Activated naive CD4-positive, alpha-beta T cell treated with anti-CD3 and anti-CD28 coated beads for 36 hours (primary cell): ENCODE measurements at regions of chr6 and their contacts with region 1.

Region 1: GRCh38 chr6:1609648-1610496 is at the start of gene FOXC1:
- DNase-seq: peak; percentile 57
- H3K4me3 Mint-ChIP-seq: peak within 1 kb of the TSS; percentile 65
- H3K27ac Mint-ChIP-seq: no peak within 1 kb of the TSS
- H3K4me1 Mint-ChIP-seq: peaks cover 48% of the 10 kb centered on the region
- H3K27me3 Mint-ChIP-seq: peaks cover 63% of the 10 kb centered on the region
- total RNA-seq, gene FOXC1: not detected

Region 2: DNA sequence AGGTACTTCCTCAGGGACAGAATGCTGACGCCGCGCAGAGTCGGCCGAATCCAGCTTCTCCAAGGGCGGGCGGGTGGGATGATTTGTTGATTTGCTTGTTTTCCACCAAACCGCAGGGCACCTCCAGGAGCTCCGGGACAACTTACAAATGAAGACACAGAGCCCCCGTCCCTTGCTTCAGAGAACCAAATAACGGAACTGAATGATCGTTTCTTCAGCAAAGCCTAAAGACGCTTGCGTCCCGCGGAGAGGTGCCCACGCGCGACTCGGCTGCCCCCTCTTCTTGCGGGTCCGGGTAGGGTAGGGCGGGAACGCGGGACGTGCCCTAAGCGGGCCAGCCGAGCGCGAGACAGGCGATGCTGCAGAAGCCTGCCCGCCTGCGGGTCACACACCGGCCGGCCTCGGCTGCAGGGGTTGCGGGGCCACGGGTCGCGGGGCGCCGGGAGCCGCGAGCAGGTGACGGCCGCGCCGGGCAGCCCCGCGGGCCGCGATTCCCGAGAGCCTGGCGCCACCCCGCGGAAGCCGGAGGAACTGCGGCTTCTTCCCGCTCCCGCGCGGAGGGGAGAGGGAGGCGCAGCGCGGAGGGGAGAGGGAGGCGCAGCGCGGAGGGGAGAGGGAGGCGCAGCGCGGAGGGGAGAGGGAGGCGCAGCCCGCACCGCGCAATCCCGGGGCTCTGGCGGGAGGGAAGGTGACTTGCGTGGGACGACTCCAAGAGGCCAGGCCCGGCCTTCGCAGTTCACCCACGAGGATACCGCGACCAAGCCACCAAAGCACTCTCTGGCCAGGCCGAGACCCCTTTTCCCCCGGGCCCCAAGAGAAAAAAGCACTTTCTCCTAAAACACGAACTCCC is 228.2 kb before region 1 on chr6:
- CTCF ChIA-PET with region 1: no interaction called
- intact Hi-C with region 1: loop called (anchors 5 kb)
- DNase-seq: peak; percentile 63
- H3K4me3 Mint-ChIP-seq: no peak overlapping the region
- H3K27ac Mint-ChIP-seq: no peak overlapping the region
- H3K4me1 Mint-ChIP-seq: peaks cover 41% of the 10 kb centered on the region
- H3K27me3 Mint-ChIP-seq: peaks cover 74% of the 10 kb centered on the region

Region 3: DNA sequence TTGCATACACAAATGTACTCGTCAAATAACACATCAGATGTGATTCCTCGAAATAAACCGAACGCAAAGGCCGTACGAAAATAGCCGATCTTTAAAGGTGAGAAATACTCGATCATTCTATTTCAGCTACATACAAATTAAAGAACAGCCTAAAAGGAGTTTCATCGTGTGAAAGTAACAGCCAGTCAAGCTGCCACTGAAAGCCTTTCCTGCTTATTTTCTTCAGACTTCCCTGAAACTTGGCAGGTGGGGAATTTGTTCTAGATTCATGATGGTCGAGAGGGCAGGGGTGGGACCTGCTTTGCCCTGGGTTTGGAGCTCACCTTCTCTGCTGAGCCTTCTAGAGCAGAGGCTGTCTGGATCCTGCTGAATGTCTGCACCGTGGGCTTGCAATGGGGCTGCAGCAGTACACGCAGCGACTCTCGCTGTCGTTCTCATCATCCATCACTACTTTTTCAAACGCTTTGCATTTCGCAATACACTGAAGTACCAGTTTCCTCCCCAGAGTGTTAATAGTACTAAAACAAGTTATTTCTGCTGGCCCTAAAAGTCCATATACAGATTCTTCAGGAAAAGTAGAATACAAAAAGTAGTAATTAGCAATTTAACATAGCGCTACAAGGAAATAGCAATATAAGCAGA is 16.0 kb after region 1 on chr6:
- CTCF ChIA-PET with region 1: interaction called, 6 read pairs
- intact Hi-C with region 1: loop called (anchors 2 kb)
- DNase-seq: no peak
- H3K4me3 Mint-ChIP-seq: no peak overlapping the region
- H3K27ac Mint-ChIP-seq: no peak overlapping the region
- H3K4me1 Mint-ChIP-seq: peaks cover 8% of the 10 kb centered on the region
- H3K27me3 Mint-ChIP-seq: peaks cover 60% of the 10 kb centered on the region

Region 4: DNA sequence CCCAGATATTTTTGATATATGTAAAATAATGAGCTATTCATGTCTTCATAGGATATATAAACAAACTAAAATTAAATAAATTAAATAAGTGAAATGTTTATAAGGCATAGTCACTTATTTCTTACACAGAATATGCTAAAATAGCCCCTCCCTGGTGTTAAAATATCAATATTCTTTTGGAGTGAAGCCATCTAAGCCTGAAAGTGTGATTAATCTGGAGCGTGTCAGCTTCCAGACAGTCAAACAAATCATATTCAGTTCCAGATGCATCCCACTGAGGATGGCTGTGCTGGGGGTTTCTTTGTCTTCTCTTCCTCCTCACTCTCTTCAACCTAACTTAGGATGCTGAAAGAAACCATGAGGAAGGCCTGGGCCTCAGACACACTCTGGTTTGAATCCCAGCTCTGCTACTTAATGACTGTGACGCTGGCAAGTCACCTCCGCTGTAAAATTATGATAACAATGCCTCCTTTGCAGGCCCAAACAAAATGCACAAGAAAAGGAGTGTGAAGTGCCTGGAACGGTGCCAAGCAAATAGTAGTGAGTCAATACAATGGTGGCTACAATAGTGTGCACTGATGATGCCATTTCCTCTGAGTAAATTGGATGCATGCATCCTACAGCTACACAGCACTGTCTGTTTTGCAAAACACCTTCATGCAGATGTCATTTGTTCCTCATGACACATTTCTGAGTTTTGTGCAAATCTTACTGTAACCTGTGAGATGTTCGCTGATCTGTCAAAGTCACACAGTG is 161.3 kb after region 1 on chr6:
- CTCF ChIA-PET with region 1: no interaction called
- intact Hi-C with region 1: loop called (anchors 5 kb)
- DNase-seq: peak; percentile 78
- H3K4me3 Mint-ChIP-seq: no peak overlapping the region
- H3K27ac Mint-ChIP-seq: no peak overlapping the region
- H3K4me1 Mint-ChIP-seq: peaks cover 47% of the 10 kb centered on the region
- H3K27me3 Mint-ChIP-seq: no peaks in the 10 kb centered on the region

Region 5: GRCh38 chr6:2063547-2063946 is 453.7 kb after region 1 on chr6:
- CTCF ChIA-PET with region 1: no interaction called
- intact Hi-C with region 1: no loop called
- DNase-seq: no peak
- H3K4me3 Mint-ChIP-seq: no peak overlapping the region
- H3K27ac Mint-ChIP-seq: no peak overlapping the region
- H3K4me1 Mint-ChIP-seq: peaks cover 2% of the 10 kb centered on the region
- H3K27me3 Mint-ChIP-seq: no peaks in the 10 kb centered on the region

Region 6: GRCh38 chr6:2353412-2354137 is 743.7 kb after region 1 on chr6:
- CTCF ChIA-PET with region 1: interaction called, 11 read pairs
- intact Hi-C with region 1: no loop called
- DNase-seq: peak; percentile 84
- H3K4me3 Mint-ChIP-seq: no peak overlapping the region
- H3K27ac Mint-ChIP-seq: no peak overlapping the region
- H3K4me1 Mint-ChIP-seq: no peaks in the 10 kb centered on the region
- H3K27me3 Mint-ChIP-seq: no peaks in the 10 kb centered on the region

Region 7: GRCh38 chr6:3068329-3069214 is 1458.7 kb after region 1 on chr6 and contains the start of gene RIPK1:
- CTCF ChIA-PET with region 1: no interaction called
- intact Hi-C with region 1: loop called (anchors 5 kb)
- DNase-seq: peak; percentile 95
- H3K4me3 Mint-ChIP-seq: peak within 1 kb of the TSS; percentile 92
- H3K27ac Mint-ChIP-seq: peak within 1 kb of the TSS; percentile 97
- H3K4me1 Mint-ChIP-seq: peaks cover 49% of the 10 kb centered on the region
- H3K27me3 Mint-ChIP-seq: no peaks in the 10 kb centered on the region
- total RNA-seq, gene RIPK1: 8.8 to 10.1 TPM